GM12878 (cell line): ENCODE measurements at regions of chr18 and their contacts with region 1.

Region 1: DNA sequence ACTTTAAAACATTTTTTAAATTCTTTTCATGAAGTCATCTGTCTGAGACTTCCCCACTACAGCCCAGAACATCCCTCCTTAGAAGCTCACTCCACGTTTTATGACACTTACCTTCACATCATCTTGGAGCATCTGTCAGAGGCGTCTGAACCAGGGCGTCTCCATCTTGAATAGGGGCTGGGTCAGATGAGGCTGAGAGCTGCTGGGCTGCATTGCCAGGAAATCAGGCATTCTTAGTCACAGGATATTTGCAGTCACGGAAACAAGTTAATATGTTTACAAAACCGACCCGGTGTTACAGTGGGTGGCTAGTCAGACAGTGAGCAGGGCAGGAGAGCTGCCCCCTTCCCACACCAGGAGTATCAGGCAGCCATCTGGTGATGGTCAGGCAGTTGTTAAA is 456.5 kb downstream of the FBXO15 start:
- DNase-seq: no peak
- ATAC-seq: no peak
- H3K4me3 ChIP-seq: no peak overlapping the region
- H3K27ac ChIP-seq: no peak overlapping the region
- H3K4me1 ChIP-seq: peaks cover 24% of the 10 kb centered on the region
- H3K27me3 ChIP-seq: no peaks in the 10 kb centered on the region
- CTCF ChIP-seq: no peak
- EP300 ChIP-seq: no peak
- POLR2A ChIP-seq: no peak
- RAD21 ChIP-seq: no peak

Region 2: DNA sequence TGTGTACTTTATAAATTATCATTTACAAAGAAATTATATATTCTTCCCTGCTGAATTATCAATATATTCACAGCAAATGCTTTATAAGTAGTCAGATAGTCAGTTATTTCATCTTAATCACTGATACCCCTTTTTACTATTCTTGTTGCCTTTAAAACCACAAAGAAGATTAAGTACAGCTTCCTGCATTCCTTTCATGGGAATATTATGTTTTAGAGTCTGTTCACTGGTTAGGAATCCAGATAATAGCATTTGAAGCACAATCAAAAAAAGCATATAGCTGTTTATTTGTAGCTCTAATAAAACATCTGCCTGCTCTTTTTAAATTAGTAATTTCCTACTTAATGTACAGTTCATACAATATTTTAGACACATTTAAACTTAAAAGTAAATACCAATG is 52.4 kb before region 1 on chr18:
- CTCF ChIA-PET with region 1: no interaction called
- POLR2A ChIA-PET with region 1: no interaction called
- RAD21 ChIA-PET with region 1: no interaction called
- SMC1A ChIA-PET with region 1: no interaction called
- in situ Hi-C with region 1: no loop called
- intact Hi-C with region 1: loop called (anchors 10 kb)
- DNase-seq: no peak
- ATAC-seq: no peak
- H3K4me3 ChIP-seq: no peak overlapping the region
- H3K27ac ChIP-seq: no peak overlapping the region
- H3K4me1 ChIP-seq: no peaks in the 10 kb centered on the region
- H3K27me3 ChIP-seq: no peaks in the 10 kb centered on the region
- CTCF ChIP-seq: no peak
- EP300 ChIP-seq: no peak
- POLR2A ChIP-seq: no peak
- RAD21 ChIP-seq: no peak

Region 3: DNA sequence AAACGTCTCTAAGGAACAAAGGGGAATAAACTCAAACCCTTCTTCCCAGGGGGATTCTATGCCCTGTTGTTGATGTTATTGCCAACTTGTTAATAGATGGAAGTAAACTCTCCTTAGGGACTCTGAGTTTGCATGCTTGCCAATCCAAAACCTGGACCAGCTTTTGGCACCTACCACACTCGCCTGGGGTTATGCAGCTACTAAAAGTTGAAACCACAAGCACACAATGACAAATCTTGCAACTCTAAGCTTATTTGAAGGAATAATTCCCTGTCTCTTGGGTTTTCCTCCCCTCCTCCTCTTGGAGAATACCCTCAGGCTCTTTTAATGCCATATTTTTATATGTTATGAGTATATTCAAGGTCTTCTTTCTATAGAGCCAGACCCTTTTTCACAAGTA is 27.5 kb before region 1 on chr18:
- CTCF ChIA-PET with region 1: no interaction called
- POLR2A ChIA-PET with region 1: no interaction called
- RAD21 ChIA-PET with region 1: no interaction called
- SMC1A ChIA-PET with region 1: no interaction called
- in situ Hi-C with region 1: no loop called
- intact Hi-C with region 1: loop called (anchors 5 kb)
- DNase-seq: no peak
- ATAC-seq: no peak
- H3K4me3 ChIP-seq: no peak overlapping the region
- H3K27ac ChIP-seq: no peak overlapping the region
- H3K4me1 ChIP-seq: no peaks in the 10 kb centered on the region
- H3K27me3 ChIP-seq: no peaks in the 10 kb centered on the region; a peak in 1 of 4 replicates
- CTCF ChIP-seq: no peak
- EP300 ChIP-seq: no peak
- POLR2A ChIP-seq: no peak
- RAD21 ChIP-seq: no peak

Region 4: DNA sequence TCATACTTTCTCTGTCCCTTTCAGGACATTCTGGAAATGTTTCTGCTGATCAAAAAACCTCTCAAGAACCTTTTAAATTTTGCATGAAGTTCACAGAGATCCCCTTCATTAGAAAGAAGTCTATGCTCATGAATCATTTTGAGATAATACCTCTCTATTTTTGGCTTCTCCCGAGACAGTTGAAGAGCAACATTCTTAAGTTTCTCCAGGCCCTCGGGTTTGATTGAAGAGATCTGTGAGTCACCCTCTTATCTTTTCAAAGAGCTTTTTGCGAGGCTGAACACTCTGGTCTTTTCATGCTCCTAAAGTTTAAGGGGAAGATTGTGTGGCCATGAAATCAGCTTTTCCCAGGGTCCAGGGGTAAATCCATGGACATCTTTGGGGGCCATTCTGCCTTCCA is 102.3 kb after region 1 on chr18:
- CTCF ChIA-PET with region 1: no interaction called
- POLR2A ChIA-PET with region 1: no interaction called
- RAD21 ChIA-PET with region 1: no interaction called
- SMC1A ChIA-PET with region 1: no interaction called
- in situ Hi-C with region 1: no loop called
- intact Hi-C with region 1: no loop called
- DNase-seq: no peak
- ATAC-seq: no peak
- H3K4me3 ChIP-seq: no peak overlapping the region
- H3K27ac ChIP-seq: no peak overlapping the region
- H3K4me1 ChIP-seq: no peaks in the 10 kb centered on the region
- H3K27me3 ChIP-seq: no peaks in the 10 kb centered on the region
- CTCF ChIP-seq: no peak
- EP300 ChIP-seq: no peak
- POLR2A ChIP-seq: no peak
- RAD21 ChIP-seq: no peak

Region 5: DNA sequence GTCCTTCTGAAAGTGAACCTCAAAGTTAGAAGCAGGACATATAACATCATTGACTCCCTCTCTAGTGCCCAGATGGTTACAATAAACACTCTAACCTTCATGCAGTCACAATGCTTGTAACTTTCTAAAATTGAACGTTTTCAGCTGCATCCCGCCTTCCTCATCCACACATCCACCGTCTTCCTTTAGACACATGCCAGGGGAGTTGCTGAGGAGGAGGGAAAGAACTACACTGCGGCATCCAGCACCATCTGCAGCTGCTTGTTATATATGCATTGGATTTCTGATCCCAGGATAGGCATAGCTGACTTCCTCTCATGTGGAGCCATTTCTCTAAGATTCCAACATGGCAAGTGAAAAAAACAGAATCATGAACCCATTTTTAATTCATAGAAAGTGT is 359.7 kb after region 1 on chr18:
- CTCF ChIA-PET with region 1: no interaction called
- POLR2A ChIA-PET with region 1: no interaction called
- RAD21 ChIA-PET with region 1: no interaction called
- SMC1A ChIA-PET with region 1: no interaction called
- in situ Hi-C with region 1: no loop called
- intact Hi-C with region 1: no loop called
- DNase-seq: no peak
- ATAC-seq: no peak
- H3K4me3 ChIP-seq: no peak overlapping the region
- H3K27ac ChIP-seq: no peak overlapping the region
- H3K4me1 ChIP-seq: no peaks in the 10 kb centered on the region
- H3K27me3 ChIP-seq: no peaks in the 10 kb centered on the region; a peak in 1 of 4 replicates
- CTCF ChIP-seq: no peak
- EP300 ChIP-seq: no peak
- POLR2A ChIP-seq: no peak
- RAD21 ChIP-seq: no peak

Region 6: DNA sequence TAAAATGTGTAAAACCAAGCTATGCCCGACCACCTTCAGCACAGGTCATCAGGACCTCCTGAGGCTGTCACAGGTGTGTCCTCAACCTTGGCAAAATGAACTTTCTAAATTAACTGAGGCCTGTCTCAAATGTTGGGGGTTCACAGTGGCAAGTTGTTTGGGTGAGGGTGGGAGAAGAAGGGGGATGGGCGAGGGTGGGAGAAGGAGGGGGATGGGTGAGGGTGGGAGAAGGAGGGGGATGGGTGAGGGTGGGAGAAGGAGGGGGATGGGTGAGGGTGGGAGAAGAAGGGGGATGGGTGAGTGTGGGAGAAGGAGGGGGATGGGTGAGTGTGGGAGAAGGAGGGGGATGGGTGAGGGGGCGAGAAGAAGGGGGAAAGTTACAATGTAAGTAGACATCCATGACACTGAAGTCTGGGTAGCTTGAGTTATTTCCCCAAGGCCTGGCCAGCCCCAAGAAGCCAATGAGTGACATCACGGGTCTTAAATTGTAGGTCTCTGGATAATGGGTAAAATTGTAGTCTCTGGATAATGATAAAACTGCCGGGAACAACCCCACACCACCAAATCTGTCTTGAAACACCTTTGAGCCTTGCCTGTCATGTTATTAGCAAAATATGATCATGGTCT is 513.5 kb after region 1 on chr18:
- CTCF ChIA-PET with region 1: no interaction called
- POLR2A ChIA-PET with region 1: no interaction called
- RAD21 ChIA-PET with region 1: no interaction called
- SMC1A ChIA-PET with region 1: no interaction called
- in situ Hi-C with region 1: no loop called
- intact Hi-C with region 1: no loop called
- DNase-seq: no peak
- ATAC-seq: no peak
- H3K4me3 ChIP-seq: no peak overlapping the region
- H3K27ac ChIP-seq: no peak overlapping the region
- H3K4me1 ChIP-seq: no peaks in the 10 kb centered on the region
- H3K27me3 ChIP-seq: no peaks in the 10 kb centered on the region
- CTCF ChIP-seq: no peak
- EP300 ChIP-seq: no peak
- POLR2A ChIP-seq: no peak
- RAD21 ChIP-seq: no peak